Mammary epithelial cell (primary cell): ENCODE measurements at regions of chr9 and their contacts with region 1.

Region 1: DNA sequence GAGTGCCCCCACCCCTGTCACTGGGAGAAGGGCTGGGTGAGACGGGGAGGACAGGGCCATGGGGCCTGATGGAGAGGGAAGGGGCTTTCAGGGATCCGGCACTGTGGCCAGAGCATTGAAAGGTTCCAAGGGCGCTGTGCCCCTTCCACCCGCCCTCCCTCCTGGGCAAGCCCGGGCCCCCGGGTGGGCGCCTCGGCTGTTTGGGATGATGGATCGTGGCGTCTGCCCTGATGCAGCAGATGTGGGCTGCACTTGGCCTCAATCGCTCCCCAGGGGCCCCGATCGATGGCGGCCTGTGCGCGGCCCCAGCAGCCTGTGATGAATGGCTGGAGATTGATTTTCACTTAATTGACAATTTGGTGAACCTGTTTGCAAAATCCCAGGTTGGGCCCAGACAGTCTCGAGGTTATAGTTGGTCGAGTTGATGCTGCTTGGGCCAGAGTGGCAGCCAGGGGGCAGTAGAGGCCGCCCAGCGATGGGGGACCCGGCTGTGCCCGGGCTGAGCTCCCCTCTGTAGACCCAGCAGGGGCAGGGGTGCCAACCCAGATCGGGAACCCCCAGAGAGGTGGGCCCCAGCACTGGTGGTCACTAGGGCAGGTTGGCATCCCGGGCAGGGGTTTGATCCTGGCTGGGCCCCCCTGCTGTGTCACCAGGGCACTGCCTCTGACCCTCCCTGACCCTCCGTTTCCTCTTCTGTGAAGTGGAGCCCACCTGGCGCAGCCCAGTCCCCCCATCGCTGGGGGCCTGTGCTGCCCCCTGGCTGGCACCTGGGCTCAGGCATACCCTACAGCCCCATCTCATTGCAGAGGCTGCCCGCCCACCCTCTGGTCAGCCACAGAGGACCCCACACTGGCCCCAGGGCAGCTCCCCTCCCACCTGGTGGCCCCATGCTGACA is 34.7 kb downstream of the LHX3 start:
- DNase-seq: no peak
- H3K4me3 ChIP-seq: no peak overlapping the region
- H3K27ac ChIP-seq: no peak overlapping the region
- H3K4me1 ChIP-seq: no peaks in the 10 kb centered on the region
- H3K27me3 ChIP-seq: peaks cover 4% of the 10 kb centered on the region
- CTCF ChIP-seq: peak; percentile 80 to 83

Region 2: DNA sequence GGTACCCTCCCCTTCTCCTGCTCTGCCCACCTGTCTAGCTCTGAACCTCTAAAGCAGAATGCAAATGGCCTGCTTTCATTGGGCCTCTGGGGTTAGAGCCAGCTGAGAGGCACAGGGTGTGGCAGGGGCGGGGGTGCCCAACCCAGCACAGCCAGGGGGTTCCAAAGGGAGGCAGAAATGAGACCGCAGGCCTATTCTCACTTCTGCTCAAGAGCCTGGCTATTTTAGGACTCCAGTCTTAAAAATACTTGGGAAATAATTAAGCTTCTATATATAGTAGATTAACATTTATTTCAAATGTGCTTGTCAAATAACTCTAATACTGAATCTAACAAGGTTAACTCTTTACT is 69.7 kb after region 1 on chr9:
- CTCF ChIA-PET with region 1: no interaction called
- dilution Hi-C with region 1: no loop called
- in situ Hi-C with region 1: no loop called
- intact Hi-C with region 1: no loop called
- DNase-seq: no peak
- H3K4me3 ChIP-seq: no peak overlapping the region
- H3K27ac ChIP-seq: no peak overlapping the region
- H3K4me1 ChIP-seq: peaks cover 7% of the 10 kb centered on the region
- H3K27me3 ChIP-seq: no peaks in the 10 kb centered on the region
- CTCF ChIP-seq: no peak

Region 3: DNA sequence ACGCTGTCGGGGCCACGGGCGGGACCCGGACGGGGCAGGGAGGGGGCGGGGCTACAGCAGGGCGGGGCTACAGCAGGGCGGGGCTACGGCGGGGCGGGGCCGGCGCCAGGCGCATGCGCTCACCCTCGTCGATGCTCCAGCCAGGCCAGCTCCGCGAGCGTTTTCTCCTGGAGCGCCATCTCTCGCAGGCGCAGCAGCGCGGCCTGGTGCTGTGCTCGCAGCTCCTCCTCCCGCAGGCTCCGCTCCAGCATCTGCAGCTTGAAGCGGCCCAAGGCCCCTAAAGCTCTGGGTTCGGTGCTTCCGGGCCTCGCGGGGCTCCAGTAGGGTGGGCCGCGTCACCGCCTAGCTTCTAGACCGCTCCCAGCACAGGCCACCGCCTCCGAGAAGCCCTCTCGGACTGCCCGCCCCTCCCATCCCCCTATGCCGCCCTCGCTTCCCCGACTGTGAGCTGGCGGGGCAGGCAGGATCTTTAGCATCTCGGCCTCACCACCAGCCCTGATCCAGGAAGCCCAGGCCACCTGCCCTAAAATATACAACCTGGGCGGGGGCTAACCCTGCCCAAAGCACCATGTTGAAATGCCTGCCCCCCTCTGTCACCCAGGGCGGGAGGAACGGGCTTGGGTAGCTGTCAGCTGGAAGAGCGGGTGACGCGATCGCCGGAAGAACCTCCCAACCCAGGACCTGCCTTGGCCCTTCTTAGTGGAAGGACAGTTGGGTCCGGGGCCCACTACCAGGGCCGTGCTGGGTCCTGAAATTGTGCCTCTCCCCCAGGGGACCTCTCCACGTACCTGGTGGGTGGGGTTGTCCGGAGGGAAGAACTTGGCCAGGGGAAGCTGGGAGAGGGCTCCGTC is 97.2 kb after region 1 on chr9:
- CTCF ChIA-PET with region 1: no interaction called
- dilution Hi-C with region 1: no loop called
- in situ Hi-C with region 1: no loop called
- intact Hi-C with region 1: loop called (anchors 5 kb)
- DNase-seq: peak; percentile 66
- H3K4me3 ChIP-seq: peak overlapping the region; percentile 41 to 59 (median 55)
- H3K27ac ChIP-seq: no peak overlapping the region
- H3K4me1 ChIP-seq: peaks cover 5% of the 10 kb centered on the region
- H3K27me3 ChIP-seq: peaks cover 3% of the 10 kb centered on the region
- CTCF ChIP-seq: peak in 1 of 2 donors; percentile 40

Region 4: DNA sequence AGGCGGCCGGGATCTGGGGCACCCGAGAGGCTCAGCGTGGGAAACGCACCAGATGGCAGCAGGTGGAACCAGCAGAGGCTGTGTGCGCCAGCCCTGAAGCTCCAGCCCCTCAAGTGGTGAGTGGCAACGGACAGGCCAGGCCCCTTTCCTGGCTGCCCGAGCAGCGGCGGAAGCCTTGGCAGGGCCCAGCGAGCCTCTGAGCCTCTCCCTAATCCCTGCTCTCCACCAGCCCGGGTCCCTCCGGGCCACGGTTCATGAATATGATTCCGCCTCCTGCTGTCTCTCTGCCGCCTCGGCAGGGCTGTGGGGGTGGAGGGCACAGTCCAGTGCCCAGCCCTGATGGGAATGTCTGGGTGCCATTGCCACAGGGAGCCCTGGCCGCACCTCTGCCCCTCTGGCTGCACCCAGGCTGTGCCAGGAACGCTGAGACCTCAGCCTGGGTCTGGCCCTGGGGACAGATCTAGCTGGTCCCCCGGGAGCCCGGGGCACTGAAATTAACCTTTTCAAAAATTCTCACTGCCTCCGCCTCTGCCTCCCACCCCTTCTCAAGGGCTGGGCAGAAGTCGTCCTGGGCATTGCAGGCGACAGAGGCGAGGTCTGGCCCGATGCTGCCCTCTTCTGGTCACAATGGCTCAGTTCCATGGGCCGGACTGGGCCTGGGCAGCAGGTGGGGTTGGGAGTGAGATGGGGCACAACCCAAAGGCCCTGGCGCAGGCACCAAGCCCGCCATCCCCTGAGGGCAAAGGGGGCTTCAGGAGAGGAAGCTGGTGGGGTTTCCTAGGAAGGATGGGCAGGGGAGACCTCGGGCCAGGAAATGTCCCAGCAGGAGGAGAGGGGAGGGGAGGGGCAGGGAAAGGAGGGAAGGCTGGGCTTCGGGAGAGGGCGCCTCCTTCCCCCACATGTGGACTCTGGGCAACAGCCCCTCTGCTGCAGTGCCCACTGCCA is 113.3 kb after region 1 on chr9:
- CTCF ChIA-PET with region 1: no interaction called
- dilution Hi-C with region 1: no loop called
- in situ Hi-C with region 1: no loop called
- intact Hi-C with region 1: loop called (anchors 1 kb)
- DNase-seq: peak; percentile 48
- H3K4me3 ChIP-seq: peak overlapping the region in 1 of 3 experiments; percentile 9
- H3K27ac ChIP-seq: no peak overlapping the region
- H3K4me1 ChIP-seq: peaks cover 6% of the 10 kb centered on the region
- H3K27me3 ChIP-seq: no peaks in the 10 kb centered on the region
- CTCF ChIP-seq: peak; percentile 86 to 88